Mammary epithelial cell (primary cell): ENCODE measurements at regions of chr5 and their contacts with region 1.

Region 1: GRCh38 chr5:14208071-14209021 is 65.2 kb downstream of the TRIO start:
- DNase-seq: peak; percentile 90
- H3K4me3 ChIP-seq: peak overlapping the region in 2 of 3 experiments; percentile 10 to 30
- H3K27ac ChIP-seq: peak overlapping the region; percentile 91
- H3K4me1 ChIP-seq: peaks cover 86% of the 10 kb centered on the region
- H3K27me3 ChIP-seq: no peaks in the 10 kb centered on the region
- CTCF ChIP-seq: no peak

Region 2: GRCh38 chr5:14035859-14036440 is 172.4 kb before region 1 on chr5:
- CTCF ChIA-PET with region 1: no interaction called
- dilution Hi-C with region 1: no loop called
- in situ Hi-C with region 1: no loop called
- intact Hi-C with region 1: loop called (anchors 2 kb)
- DNase-seq: peak; percentile 99
- H3K4me3 ChIP-seq: peak overlapping the region in 2 of 3 experiments; percentile 7 to 22
- H3K27ac ChIP-seq: peak overlapping the region; percentile 93
- H3K4me1 ChIP-seq: peaks cover 62% of the 10 kb centered on the region
- H3K27me3 ChIP-seq: no peaks in the 10 kb centered on the region
- CTCF ChIP-seq: no peak

Region 3: GRCh38 chr5:14190194-14191164 is 17.9 kb before region 1 on chr5:
- CTCF ChIA-PET with region 1: no interaction called
- dilution Hi-C with region 1: no loop called
- in situ Hi-C with region 1: no loop called
- intact Hi-C with region 1: loop called (anchors 2 kb)
- DNase-seq: peak; percentile 97
- H3K4me3 ChIP-seq: peak overlapping the region; percentile 24 to 28 (median 27)
- H3K27ac ChIP-seq: peak overlapping the region; percentile 97
- H3K4me1 ChIP-seq: peaks cover 62% of the 10 kb centered on the region
- H3K27me3 ChIP-seq: no peaks in the 10 kb centered on the region
- CTCF ChIP-seq: no peak

Region 4: DNA sequence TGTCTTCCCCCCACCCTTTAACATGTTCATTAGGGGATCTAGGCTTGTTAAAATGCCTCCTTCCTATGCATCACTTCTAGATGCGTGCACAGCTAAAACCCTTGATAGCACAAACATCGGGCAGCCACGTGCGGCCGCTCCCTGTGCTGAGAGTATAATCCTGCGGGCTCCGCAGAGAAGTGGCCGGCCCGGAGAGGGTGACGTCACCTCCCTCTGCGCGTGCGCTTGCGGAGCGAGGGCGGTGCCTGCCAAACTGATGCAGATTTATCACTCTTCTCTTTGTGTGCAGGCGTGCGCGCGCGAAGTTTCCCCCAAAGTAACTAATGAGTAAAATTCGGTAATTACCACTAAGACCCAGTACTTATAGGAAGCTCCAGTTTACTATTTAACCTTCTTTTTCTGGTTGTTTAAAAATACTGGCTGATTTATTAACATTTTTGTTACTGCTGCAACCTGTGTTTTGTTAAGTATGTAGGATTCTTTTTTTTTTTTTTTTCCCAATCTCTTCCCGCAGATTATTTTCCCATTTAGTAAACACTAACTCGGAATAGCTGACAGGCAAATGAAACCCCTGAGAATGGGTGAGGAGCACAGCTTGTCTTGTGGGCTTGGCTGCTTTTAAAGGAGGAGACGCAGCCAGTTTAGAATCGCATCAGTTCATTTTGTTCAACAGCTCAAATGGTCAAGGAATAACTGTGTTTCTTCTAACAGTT is 56.4 kb after region 1 on chr5:
- CTCF ChIA-PET with region 1: interaction called, 10 read pairs
- dilution Hi-C with region 1: no loop called
- in situ Hi-C with region 1: no loop called
- intact Hi-C with region 1: loop called (anchors 1 kb)
- DNase-seq: peak; percentile 91
- H3K4me3 ChIP-seq: peak overlapping the region; percentile 9 to 23 (median 20)
- H3K27ac ChIP-seq: peak overlapping the region; percentile 95
- H3K4me1 ChIP-seq: peaks cover 61% of the 10 kb centered on the region
- H3K27me3 ChIP-seq: no peaks in the 10 kb centered on the region
- CTCF ChIP-seq: no peak